Heart left ventricle (tissue), 16 donors: ENCODE measurements at regions of chr15 and their contacts with region 1.

Region 1: GRCh38 chr15:78811124-78811824 is at the start of gene ADAMTS7:
- DNase-seq: peak; percentile 82 to 90 (median 84)
- ATAC-seq: peak; percentile 63 to 91 (median 83)
- H3K4me3 ChIP-seq: peak within 1 kb of the TSS; percentile 59 to 88 (median 80)
- H3K27ac ChIP-seq: peak within 1 kb of the TSS; percentile 15 to 91 (median 88)
- H3K4me1 ChIP-seq: peaks cover 2 to 34% (median 16%) of the 10 kb centered on the region in 12 donors
- H3K27me3 ChIP-seq: peaks cover 0 to 34% (median 0%) of the 10 kb centered on the region in 9 donors
- CTCF ChIP-seq: peak; percentile 49 to 88 (median 72)
- POLR2A ChIP-seq: no peak
- total RNA-seq, gene ADAMTS7: 8.0 to 29.9 (median 13.9) TPM

Region 2: GRCh38 chr15:78761891-78762385 is 49.3 kb before region 1 on chr15:
- intact Hi-C with region 1: loop called in 9 of 10 experiments (anchors 2 to 10 kb)
- DNase-seq: peak in 1 of 5 donors; percentile 21
- ATAC-seq: peak in 1 of 4 donors; percentile 0
- H3K4me3 ChIP-seq: no peak overlapping the region
- H3K27ac ChIP-seq: peak overlapping the region in 10 of 12 donors; percentile 33 to 64 (median 42)
- H3K4me1 ChIP-seq: peaks cover 16 to 63% (median 42%) of the 10 kb centered on the region in 12 donors
- H3K27me3 ChIP-seq: no peaks in the 10 kb centered on the region
- CTCF ChIP-seq: no peak
- POLR2A ChIP-seq: no peak

Region 3: GRCh38 chr15:78767331-78767951 is 43.8 kb before region 1 on chr15:
- intact Hi-C with region 1: loop called in 3 of 10 experiments (anchors 5 to 10 kb)
- DNase-seq: peak in 4 of 5 donors; percentile 6 to 38 (median 14)
- ATAC-seq: no peak
- H3K4me3 ChIP-seq: no peak overlapping the region
- H3K27ac ChIP-seq: no peak overlapping the region
- H3K4me1 ChIP-seq: peaks cover 0 to 12% (median 0%) of the 10 kb centered on the region in 12 donors
- H3K27me3 ChIP-seq: no peaks in the 10 kb centered on the region
- CTCF ChIP-seq: no peak
- POLR2A ChIP-seq: no peak

Region 4: GRCh38 chr15:78859971-78860732 is 48.9 kb after region 1 on chr15:
- intact Hi-C with region 1: loop called in 1 of 10 experiments (anchors 10 kb)
- DNase-seq: peak; percentile 43 to 78 (median 63)
- ATAC-seq: peak; percentile 65 to 94 (median 87)
- H3K4me3 ChIP-seq: peak overlapping the region in 11 of 12 donors; percentile 12 to 66 (median 50)
- H3K27ac ChIP-seq: peak overlapping the region in 9 of 12 donors; percentile 8 to 70 (median 33)
- H3K4me1 ChIP-seq: peaks cover 0 to 6% (median 0%) of the 10 kb centered on the region in 12 donors
- H3K27me3 ChIP-seq: no peaks in the 10 kb centered on the region
- CTCF ChIP-seq: peak; percentile 30 to 73 (median 59)
- POLR2A ChIP-seq: no peak

Region 5: GRCh38 chr15:78938658-78939488 is 127.6 kb after region 1 on chr15:
- intact Hi-C with region 1: no loop called
- DNase-seq: no peak
- ATAC-seq: no peak
- H3K4me3 ChIP-seq: peak overlapping the region in 1 of 12 donors; percentile 6
- H3K27ac ChIP-seq: peak overlapping the region in 11 of 12 donors; percentile 16 to 91 (median 66)
- H3K4me1 ChIP-seq: peaks cover 3 to 92% (median 46%) of the 10 kb centered on the region in 12 donors
- H3K27me3 ChIP-seq: no peaks in the 10 kb centered on the region
- CTCF ChIP-seq: no peak
- POLR2A ChIP-seq: no peak